Motor neuron (in vitro differentiated cells): ENCODE measurements at regions of chr5 and their contacts with region 1.

Region 1: GRCh38 chr5:113330533-113331208 is 104.1 kb downstream of the TSSK1B start:
- ATAC-seq: peak; percentile 43 to 70 (median 56)
- H3K4me3 ChIP-seq: no peak overlapping the region
- H3K27ac ChIP-seq: no peak overlapping the region
- H3K4me1 ChIP-seq: peaks cover 5 to 7% of the 10 kb centered on the region in 2 donors

Region 2: GRCh38 chr5:113022661-113023060 is 308.0 kb before region 1 on chr5:
- in situ Hi-C with region 1: loop called in 2 of 9 experiments (anchors 25 kb)
- ATAC-seq: peak in 1 of 8 experiments; percentile 28
- H3K4me3 ChIP-seq: no peak overlapping the region
- H3K27ac ChIP-seq: no peak overlapping the region
- H3K4me1 ChIP-seq: no peaks in the 10 kb centered on the region

Region 3: DNA sequence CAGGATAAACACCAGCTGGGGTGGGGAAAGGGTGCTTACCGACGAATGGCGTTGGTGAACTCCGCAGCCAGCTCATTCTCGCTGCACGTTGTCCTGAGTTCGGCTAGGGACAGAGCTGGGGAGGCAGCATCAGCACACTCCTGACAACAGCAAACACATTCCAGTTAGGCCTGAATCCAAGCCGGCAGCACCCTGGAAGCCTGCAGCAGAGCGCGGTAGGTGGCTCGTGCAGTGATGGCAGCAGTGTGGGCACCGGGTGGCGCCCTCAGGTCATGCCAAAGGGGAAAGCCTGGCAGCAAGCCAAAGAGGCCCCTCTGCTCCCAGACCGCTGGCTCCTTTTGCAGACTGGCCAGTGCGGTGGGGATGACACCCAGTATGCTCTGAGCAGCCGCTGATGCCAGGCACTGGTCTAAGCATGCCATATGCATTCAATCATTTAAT is 287.2 kb before region 1 on chr5:
- in situ Hi-C with region 1: loop called in 1 of 9 experiments (anchors 25 kb)
- ATAC-seq: peak in 6 of 8 experiments; percentile 52 to 92 (median 80)
- H3K4me3 ChIP-seq: no peak overlapping the region
- H3K27ac ChIP-seq: no peak overlapping the region
- H3K4me1 ChIP-seq: peaks cover 9 to 13% of the 10 kb centered on the region in 2 donors

Region 4: DNA sequence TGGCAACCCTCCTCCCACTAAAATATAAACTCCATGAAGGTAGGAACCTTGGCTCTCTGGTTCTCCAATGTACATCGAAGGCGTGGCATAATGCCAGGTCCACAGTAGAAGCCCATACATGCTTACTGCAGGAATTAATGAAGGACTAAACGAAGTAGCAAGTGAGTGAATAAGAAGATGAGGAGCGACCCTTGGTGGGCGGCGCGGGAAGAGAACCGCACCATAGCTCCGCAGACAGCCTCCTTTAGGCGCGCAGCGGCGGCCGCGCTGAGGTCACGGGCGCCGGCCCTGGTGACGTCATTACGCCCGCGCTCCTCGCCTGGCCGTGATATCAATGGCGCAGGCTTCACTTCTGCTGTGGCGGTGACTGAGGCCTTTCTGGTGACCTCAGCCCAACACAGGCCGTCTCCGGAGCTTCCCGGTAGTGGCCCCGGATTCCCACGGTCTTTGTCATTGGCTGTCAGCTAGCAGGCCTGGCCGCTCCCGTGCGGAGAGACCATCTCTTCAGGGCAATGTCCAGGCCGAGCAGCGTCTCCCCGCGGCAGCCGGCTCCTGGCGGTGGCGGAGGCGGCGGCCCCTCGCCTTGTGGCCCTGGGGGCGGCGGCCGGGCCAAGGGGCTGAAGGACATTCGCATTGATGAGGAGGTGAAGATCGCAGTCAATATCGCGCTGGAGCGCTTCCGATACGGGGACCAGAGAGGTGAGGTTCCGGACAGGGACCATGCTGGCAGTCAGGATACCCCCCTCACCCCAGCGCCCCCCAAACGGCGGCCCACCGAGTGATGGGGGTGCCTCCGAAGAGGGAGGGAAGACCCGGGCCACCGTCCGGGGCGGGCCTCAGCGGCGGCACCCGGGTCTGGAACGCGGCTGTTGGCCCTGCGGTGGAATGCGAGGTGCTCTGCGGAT is 183.0 kb after region 1 on chr5 and contains the start of gene YTHDC2:
- in situ Hi-C with region 1: loop called in 1 of 9 experiments (anchors 25 kb)
- ATAC-seq: peak; percentile 93 to 98 (median 96)
- H3K4me3 ChIP-seq: peak within 1 kb of the TSS; percentile 60 to 81 (median 68)
- H3K27ac ChIP-seq: peak within 1 kb of the TSS; percentile 89 to 91
- H3K4me1 ChIP-seq: peaks cover 2 to 15% of the 10 kb centered on the region in 2 donors
- total RNA-seq, gene YTHDC2: 16.8 to 46.2 (median 21.8) TPM

Region 5: DNA sequence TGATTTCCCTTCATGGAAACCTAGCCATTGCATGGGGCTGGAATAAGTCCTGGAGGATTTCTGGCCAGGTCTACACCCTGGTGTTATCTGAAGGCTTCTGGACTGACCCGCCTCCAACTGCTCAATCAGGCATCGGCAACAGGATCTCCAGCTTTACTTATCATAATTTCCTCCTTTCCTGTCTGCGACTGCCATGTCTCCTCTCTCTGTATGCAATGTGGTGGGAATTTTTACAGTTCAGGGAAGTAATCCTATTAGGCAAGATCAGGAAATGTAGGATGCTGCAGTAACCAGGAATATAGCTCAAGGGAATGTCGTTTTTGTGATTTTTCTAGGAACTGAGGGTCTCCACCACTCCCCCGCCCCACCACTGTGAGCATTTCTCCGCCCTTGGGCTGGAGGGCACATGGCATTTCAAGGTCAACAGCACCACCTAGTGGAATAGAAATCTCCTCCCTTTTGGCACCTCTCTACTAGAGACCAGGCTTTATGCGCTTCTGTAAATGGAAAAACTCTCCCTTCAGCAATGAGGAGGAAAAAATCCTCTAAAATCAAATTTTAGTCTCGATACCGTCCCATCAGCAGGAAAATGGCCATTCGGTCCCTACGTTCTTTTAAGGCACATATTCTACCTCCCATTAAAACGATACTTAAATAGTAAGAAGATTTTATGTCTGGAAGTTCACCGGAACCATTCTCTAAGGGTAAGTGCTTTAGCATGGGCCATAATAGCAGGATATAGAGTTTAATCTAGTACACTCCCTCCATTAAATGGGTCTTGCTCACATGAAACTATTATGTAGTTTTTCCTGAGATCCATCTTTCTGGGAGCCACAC is 275.8 kb after region 1 on chr5:
- in situ Hi-C with region 1: loop called in 2 of 9 experiments (anchors 10 kb)
- ATAC-seq: peak; percentile 59 to 100 (median 82)
- H3K4me3 ChIP-seq: no peak overlapping the region
- H3K27ac ChIP-seq: no peak overlapping the region
- H3K4me1 ChIP-seq: no peaks in the 10 kb centered on the region